Calu3 (cell line): ENCODE measurements at regions of chr1 and their contacts with region 1.

Region 1: GRCh38 chr1:24688621-24689195 is 45.6 kb downstream of the SRRM1 start:
- DNase-seq: peak; percentile 71
- H3K4me3 Mint-ChIP-seq: no peak overlapping the region
- H3K27ac Mint-ChIP-seq: no peak overlapping the region
- H3K4me1 Mint-ChIP-seq: peaks cover 16% of the 10 kb centered on the region
- H3K27me3 Mint-ChIP-seq: no peaks in the 10 kb centered on the region
- CTCF ChIP-seq: peak; percentile 38

Region 2: GRCh38 chr1:24714859-24715520 is 26.3 kb after region 1 on chr1:
- CTCF ChIA-PET with region 1: no interaction called
- intact Hi-C with region 1: no loop called
- DNase-seq: no peak
- H3K4me3 Mint-ChIP-seq: no peak overlapping the region
- H3K27ac Mint-ChIP-seq: no peak overlapping the region
- H3K4me1 Mint-ChIP-seq: no peaks in the 10 kb centered on the region
- H3K27me3 Mint-ChIP-seq: no peaks in the 10 kb centered on the region
- CTCF ChIP-seq: no peak

Region 3: GRCh38 chr1:24744911-24745710 is 56.4 kb after region 1 on chr1 and contains the start of gene CLIC4:
- CTCF ChIA-PET with region 1: interaction called, 16 read pairs
- intact Hi-C with region 1: loop called (anchors 10 kb)
- DNase-seq: peak; percentile 99
- H3K4me3 Mint-ChIP-seq: peak within 1 kb of the TSS; percentile 72
- H3K27ac Mint-ChIP-seq: peak within 1 kb of the TSS; percentile 64
- H3K4me1 Mint-ChIP-seq: peaks cover 23% of the 10 kb centered on the region
- H3K27me3 Mint-ChIP-seq: no peaks in the 10 kb centered on the region
- CTCF ChIP-seq: no peak
- total RNA-seq, gene CLIC4: 45.2 and 62.7 TPM in 2 replicates

Region 4: GRCh38 chr1:24830680-24831272 is 142.1 kb after region 1 on chr1:
- CTCF ChIA-PET with region 1: interaction called, 60 read pairs
- intact Hi-C with region 1: loop called (anchors 2 kb)
- DNase-seq: no peak
- H3K4me3 Mint-ChIP-seq: no peak overlapping the region
- H3K27ac Mint-ChIP-seq: no peak overlapping the region
- H3K4me1 Mint-ChIP-seq: no peaks in the 10 kb centered on the region
- H3K27me3 Mint-ChIP-seq: no peaks in the 10 kb centered on the region
- CTCF ChIP-seq: peak; percentile 54